ENCODE measurements at regions of chr6 and their contacts with region 1.

Region 1: DNA sequence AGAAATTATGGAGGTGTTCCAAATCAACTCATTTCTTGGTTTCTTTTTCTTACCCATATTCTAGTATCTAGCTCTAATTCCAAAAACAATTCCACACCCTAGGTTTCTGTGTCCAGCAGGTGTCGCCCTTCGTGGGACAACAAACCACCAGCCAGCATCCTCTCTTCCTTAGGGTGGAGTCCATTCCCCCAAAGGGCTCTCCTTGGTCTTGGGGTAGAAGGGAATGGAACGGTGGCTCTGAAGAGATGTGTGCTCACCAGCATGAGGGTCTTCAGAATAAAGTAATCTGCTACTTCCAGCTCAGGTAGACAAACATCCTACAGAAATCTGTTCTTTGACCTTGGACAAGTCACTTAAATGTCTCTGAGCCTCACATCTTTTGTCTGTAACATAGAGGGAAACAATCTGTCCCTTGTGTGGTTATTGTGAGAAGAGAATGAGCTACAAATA is 7.2 kb downstream of the HLA-DMB start:
- DNase-seq: no peak
- H3K4me3 ChIP-seq: no peak overlapping the region
- CTCF ChIP-seq: peak; percentile 73

Region 2: DNA sequence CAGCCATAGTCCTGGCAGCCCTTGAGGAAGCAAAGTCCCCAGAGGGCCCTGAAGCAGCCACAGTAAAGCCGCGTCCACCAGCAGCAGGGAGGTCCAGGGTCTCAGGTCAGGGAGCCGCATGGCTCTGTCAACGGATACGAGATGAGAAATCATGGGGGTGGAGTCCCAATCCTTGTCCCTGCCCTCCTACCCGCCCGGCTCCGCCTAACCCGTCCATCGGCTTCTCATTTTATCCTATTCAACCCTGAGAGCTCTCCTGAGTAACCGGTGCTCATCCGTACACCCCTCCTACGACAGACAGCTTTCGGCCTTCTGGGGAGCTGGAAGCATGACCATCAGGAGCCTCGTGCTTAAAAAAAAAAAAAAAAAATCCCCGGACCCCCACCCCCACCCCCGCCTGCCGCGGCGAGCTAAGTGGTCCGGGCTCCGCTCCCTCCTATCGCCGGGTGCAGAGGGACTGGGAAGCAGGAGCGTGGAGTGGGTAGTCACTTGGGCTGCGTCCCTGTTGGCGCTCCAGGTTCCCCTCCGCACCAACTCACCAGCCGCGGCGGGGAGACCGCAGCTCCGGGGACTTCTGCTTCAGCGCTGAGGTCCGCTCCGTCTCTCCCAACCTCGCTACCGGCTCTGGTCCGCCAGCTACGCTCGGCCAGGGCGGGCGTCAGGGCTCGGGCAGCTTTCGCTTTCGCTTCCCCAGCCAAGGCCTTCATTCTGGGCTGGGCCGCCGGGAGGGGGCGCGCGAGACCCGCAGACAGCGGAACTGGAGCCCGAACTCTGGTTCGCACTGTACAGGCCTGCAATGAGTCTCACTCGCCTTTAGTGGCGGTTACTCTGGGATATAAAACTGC is 95.3 kb before region 1 on chr6 and contains the start of gene TAP2:
- CTCF ChIA-PET with region 1: interaction called, 12 read pairs
- POLR2A ChIA-PET with region 1: no interaction called
- DNase-seq: peak; percentile 47
- H3K4me3 ChIP-seq: peak within 1 kb of the TSS; percentile 96
- CTCF ChIP-seq: peak; percentile 97

Region 3: DNA sequence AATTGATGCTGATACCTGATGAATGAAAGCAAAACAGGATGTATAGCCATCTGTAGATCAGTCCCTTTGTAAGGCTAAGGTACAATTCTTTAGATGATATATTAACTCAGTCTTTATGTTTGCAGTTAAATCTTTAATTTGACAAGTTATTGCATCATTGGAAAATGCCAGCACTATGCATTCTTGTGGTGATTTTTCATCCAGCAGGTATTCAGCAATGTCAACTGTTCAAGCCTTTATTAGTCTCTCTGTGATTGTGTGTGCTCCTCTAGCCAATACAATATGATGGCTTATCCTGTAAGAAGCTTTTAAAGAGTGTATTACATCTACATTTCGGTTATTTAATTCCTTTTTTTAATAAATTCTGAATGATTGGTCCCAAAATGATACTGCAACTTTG is 27.1 kb before region 1 on chr6:
- CTCF ChIA-PET with region 1: interaction called, 39 read pairs
- POLR2A ChIA-PET with region 1: no interaction called
- DNase-seq: no peak
- H3K4me3 ChIP-seq: no peak overlapping the region
- CTCF ChIP-seq: no peak

Region 4: DNA sequence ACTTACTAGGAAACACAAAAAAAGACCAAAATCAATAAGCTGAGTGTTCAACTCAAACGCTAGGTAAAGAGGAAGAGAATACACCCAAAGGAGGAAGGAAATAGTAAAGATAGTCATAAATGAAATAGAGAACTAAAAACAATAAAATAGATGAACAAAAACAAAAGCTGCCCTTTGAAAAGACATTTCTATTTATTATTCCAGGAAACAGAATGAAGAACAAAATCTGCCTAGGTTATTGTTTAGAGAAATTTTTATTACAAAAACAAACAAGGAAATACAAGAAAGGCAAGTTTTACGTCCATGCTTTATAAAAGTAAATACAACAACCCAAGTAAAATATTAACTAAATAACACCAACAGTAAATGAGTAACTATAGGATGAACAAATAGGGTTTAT is 12.9 kb before region 1 on chr6:
- CTCF ChIA-PET with region 1: interaction called, 42 read pairs
- POLR2A ChIA-PET with region 1: no interaction called
- DNase-seq: no peak
- H3K4me3 ChIP-seq: no peak overlapping the region
- CTCF ChIP-seq: no peak

Region 5: GRCh38 chr6:32971581-32972352 is 38.1 kb after region 1 on chr6:
- CTCF ChIA-PET with region 1: interaction called, 54 read pairs
- POLR2A ChIA-PET with region 1: interaction called, 14 read pairs
- DNase-seq: peak; percentile 99
- H3K4me3 ChIP-seq: peak overlapping the region; percentile 92
- CTCF ChIP-seq: no peak

Measured in AG04449 (cell line).